Activated CD4-positive, alpha-beta T cell treated with anti-CD3 and anti-CD28 coated beads for 36 hours (primary cell): ENCODE measurements at regions of chr6 and their contacts with region 1.

Region 1: DNA sequence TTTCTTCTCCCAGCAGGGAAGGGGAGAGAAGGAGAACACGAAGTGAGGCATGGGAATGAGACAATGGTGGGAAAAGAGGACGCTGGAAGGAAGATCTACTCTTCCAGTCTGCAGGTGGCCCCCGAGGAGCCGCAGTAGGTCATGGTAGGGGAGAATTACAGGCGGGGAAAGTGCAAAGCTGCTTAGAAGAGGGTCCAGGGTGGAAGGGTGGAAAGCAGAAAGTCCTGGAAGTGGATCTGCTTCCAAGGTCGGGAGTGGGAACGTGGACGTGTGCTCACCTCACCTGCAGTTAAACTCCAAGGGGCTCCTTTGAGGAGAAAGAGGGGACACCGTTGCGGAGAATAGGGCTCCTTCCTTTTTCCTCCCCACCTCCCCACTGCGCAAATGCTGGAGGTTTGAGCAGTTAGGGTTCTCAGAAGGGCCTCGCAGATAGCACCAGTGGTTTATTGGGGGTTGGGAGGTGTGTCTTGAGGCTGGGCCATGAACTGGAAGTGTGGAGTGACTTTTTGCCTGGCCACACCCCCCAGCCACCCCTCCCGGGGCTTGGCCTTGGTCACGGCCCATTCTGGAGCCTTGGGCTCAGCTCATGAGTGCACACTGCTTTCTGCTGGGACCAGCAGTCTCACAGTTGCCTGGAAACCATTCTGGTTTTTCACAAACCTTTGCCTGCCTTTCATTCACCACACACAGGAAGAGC is 100.4 kb upstream of the MLN start:
- DNase-seq: peak; percentile 78
- ATAC-seq: peak; percentile 92
- H3K4me3 Mint-ChIP-seq: no peak overlapping the region
- H3K27ac Mint-ChIP-seq: peak overlapping the region; percentile 65
- H3K4me1 Mint-ChIP-seq: peaks cover 53% of the 10 kb centered on the region
- H3K27me3 Mint-ChIP-seq: no peaks in the 10 kb centered on the region

Region 2: GRCh38 chr6:32255199-32256153 is 1648.7 kb before region 1 on chr6:
- CTCF ChIA-PET with region 1: no interaction called
- POLR2A ChIA-PET with region 1: no interaction called
- intact Hi-C with region 1: no loop called
- DNase-seq: peak; percentile 84
- ATAC-seq: peak; percentile 90
- H3K4me3 Mint-ChIP-seq: peak overlapping the region; percentile 43
- H3K27ac Mint-ChIP-seq: peak overlapping the region; percentile 76
- H3K4me1 Mint-ChIP-seq: peaks cover 33% of the 10 kb centered on the region
- H3K27me3 Mint-ChIP-seq: peaks cover 8% of the 10 kb centered on the region

Region 3: DNA sequence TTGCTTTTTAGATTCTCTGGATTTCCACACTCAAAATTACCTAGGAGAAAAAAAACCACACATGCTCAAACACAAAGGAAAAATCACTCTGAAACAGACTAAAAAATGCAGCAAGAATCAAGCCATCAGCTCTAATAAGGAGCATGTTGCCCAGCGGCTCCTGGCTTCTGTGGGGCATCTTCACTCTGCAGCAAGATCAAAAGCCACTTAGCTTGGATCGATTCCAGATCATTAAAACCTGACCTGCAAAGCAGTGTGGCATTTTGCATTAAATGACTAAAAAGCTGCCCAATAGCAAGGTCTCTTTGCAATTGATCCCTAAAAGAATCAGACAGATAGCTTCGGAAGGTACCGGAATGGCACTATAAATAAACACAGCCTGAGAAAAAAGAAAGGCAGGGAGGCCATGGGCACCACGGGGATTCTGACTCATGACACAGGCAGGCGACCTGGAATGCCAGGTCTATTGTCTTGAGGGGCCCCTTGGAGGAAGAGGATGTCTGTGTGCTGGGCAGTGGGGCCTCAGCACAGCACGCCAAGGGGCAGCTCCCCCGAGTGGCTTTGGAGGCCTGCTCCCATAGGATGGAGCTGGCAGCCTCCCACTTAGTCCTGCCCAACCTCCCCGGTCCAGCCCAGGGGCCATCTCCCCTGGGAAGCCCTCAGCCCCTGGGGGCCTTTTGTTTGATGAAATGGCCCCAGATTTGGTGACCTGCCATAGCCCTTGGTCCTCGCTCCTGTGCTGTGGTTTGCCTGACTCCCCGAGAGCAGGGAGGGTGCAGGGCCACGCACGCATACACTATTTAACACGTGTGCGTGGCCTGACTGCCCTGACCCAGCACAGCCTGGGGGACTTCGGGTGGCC is 122.9 kb before region 1 on chr6:
- CTCF ChIA-PET with region 1: no interaction called
- POLR2A ChIA-PET with region 1: no interaction called
- intact Hi-C with region 1: no loop called
- DNase-seq: no peak
- ATAC-seq: no peak
- H3K4me3 Mint-ChIP-seq: no peak overlapping the region
- H3K27ac Mint-ChIP-seq: peak overlapping the region; percentile 24
- H3K4me1 Mint-ChIP-seq: peaks cover 23% of the 10 kb centered on the region
- H3K27me3 Mint-ChIP-seq: no peaks in the 10 kb centered on the region

Region 4: GRCh38 chr6:33860706-33861474 is 43.3 kb before region 1 on chr6:
- CTCF ChIA-PET with region 1: no interaction called
- POLR2A ChIA-PET with region 1: no interaction called
- intact Hi-C with region 1: loop called in 1 of 2 experiments (anchors 2 kb)
- DNase-seq: peak; percentile 51
- ATAC-seq: peak; percentile 57
- H3K4me3 Mint-ChIP-seq: no peak overlapping the region
- H3K27ac Mint-ChIP-seq: no peak overlapping the region
- H3K4me1 Mint-ChIP-seq: peaks cover 47% of the 10 kb centered on the region
- H3K27me3 Mint-ChIP-seq: peaks cover 5% of the 10 kb centered on the region

Region 5: GRCh38 chr6:33950472-33950881 is 46.3 kb after region 1 on chr6:
- CTCF ChIA-PET with region 1: no interaction called
- POLR2A ChIA-PET with region 1: no interaction called
- intact Hi-C with region 1: no loop called
- DNase-seq: no peak
- ATAC-seq: no peak
- H3K4me3 Mint-ChIP-seq: no peak overlapping the region
- H3K27ac Mint-ChIP-seq: no peak overlapping the region
- H3K4me1 Mint-ChIP-seq: peaks cover 3% of the 10 kb centered on the region
- H3K27me3 Mint-ChIP-seq: peaks cover 2% of the 10 kb centered on the region